ACHN (cell line): ENCODE measurements at regions of chr12 and their contacts with region 1.

Region 1: GRCh38 chr12:47686645-47687240 is 19.1 kb downstream of the RPAP3 start:
- DNase-seq: peak; percentile 74

Region 2: DNA sequence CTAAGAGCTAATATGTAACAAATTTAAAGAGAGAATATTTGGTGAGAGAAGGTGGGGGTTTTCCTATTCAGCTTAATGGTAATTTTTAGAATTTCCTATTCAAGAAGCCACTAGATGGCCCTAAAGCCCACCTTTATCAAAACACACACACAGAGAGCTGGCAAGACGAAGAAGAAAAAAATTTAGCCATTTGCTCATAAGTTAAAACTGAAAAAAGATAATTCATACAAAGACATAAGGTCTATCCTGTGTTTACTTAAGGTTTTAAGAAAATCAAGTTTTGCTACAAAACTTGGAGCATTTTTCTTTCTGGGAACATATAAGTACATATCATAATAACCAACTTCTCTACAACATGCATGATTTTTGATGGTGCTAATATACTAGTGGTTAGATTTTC is 654.1 kb before region 1 on chr12:
- in situ Hi-C with region 1: loop called (anchors 25 kb)
- DNase-seq: peak; percentile 84

Region 3: GRCh38 chr12:47648056-47648579 is 38.6 kb before region 1 on chr12:
- in situ Hi-C with region 1: no loop called
- DNase-seq: no peak

Region 4: DNA sequence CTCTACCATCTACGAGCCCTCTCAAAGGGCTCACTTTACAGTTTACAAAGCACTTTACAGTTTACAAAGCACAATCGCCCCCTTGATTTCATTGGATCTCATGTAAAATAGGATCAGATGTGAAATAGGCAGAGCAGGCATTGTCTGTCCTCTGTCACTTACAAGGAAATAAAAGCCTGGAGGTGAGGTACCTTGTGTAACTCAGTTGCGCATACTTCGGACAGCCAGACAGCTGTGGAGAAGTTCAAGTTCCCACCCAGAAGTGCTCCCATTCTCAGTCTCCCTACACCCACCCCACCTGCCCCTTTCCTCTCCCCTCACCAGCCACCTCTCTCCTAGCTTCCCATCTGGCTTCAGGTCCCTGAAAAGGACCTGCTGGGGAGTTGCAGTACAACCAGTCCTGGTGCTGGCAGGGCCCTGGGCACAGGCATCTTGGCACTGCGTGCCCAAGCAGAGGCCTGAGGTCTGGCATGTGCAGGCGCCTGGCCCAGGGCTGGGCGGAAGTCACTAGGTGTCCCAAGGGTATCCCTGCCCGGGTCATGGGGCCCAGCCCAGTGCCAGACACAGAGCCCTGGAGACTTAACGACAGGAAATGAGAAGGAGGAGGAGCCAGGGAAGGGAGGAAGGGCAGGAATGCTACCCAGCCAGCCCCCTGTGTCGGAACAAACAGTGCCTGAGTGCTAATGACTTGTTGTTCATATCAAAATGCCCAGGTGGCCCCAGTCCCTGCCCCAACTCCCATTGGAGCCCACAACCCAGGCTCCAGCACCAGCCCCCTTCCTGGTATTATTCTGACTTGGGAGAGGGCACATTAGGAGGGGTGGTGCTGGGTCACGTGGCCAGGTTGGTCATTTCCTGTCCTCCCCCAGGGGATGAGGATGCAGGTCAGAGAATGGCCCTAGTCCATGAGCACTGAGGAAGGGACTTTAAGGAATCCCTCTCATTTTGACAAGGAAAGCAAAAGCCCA is 66.6 kb after region 1 on chr12:
- in situ Hi-C with region 1: no loop called
- DNase-seq: peak; percentile 47

Region 5: GRCh38 chr12:48105862-48106680 is 419.3 kb after region 1 on chr12 and contains the start of gene SENP1:
- in situ Hi-C with region 1: no loop called
- DNase-seq: peak; percentile 93